Ovary (tissue), 10 donors: ENCODE measurements at regions of chr3 and their contacts with region 1.

Region 1: DNA sequence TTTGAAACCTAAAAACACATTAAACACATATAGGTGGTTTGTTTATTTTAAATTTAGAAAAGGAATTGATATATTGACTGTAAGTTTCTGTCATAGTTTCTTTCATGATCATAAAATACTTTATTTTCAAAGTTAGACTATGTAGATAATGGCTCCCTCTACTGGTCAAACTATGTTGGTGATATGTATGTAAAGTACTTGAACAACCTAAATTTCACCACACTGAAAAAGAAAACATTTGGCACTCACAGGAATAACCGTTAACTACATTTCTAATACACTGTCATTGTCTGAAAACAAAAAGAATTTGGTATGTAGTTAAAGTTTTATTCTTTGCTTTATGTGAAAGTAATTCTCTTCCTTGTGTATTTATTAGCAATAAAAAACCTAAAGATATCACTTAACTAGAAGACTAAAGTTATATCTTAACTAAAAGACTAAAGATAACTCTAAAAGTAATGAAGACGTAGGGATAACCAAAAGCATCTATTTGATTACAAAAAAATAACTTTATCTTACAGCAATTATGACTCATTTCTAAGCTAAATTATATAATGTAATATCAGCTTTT is 427.5 kb downstream of the VGLL3 start:
- DNase-seq: no peak
- H3K4me3 ChIP-seq: no peak overlapping the region
- H3K27ac ChIP-seq: no peak overlapping the region
- H3K4me1 ChIP-seq: no peaks in the 10 kb centered on the region
- H3K27me3 ChIP-seq: no peaks in the 10 kb centered on the region
- CTCF ChIP-seq: no peak
- EP300 ChIP-seq: no peak
- POLR2A ChIP-seq: no peak

Region 2: DNA sequence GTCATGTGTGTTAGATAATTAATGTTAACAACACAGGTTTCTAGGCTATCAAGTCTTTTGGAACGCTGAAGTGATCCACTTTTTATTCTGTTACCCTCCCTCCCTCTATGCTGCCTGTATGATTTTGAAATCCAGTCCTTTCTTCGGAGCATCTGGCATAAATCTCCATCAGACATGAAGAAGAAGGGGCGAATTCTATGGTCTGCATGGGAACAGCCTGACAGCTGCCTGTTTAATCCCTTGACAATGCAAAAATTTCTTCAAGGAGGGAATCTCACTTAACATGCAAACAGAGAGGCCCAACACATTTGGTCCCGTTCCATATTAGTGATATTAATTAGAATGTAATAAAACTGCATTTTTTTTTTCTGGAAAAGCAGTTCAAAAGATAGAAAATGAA is 282.2 kb after region 1 on chr3:
- intact Hi-C with region 1: no loop called
- DNase-seq: no peak
- H3K4me3 ChIP-seq: no peak overlapping the region
- H3K27ac ChIP-seq: no peak overlapping the region
- H3K4me1 ChIP-seq: no peaks in the 10 kb centered on the region
- H3K27me3 ChIP-seq: no peaks in the 10 kb centered on the region
- CTCF ChIP-seq: no peak
- EP300 ChIP-seq: no peak
- POLR2A ChIP-seq: no peak

Region 3: DNA sequence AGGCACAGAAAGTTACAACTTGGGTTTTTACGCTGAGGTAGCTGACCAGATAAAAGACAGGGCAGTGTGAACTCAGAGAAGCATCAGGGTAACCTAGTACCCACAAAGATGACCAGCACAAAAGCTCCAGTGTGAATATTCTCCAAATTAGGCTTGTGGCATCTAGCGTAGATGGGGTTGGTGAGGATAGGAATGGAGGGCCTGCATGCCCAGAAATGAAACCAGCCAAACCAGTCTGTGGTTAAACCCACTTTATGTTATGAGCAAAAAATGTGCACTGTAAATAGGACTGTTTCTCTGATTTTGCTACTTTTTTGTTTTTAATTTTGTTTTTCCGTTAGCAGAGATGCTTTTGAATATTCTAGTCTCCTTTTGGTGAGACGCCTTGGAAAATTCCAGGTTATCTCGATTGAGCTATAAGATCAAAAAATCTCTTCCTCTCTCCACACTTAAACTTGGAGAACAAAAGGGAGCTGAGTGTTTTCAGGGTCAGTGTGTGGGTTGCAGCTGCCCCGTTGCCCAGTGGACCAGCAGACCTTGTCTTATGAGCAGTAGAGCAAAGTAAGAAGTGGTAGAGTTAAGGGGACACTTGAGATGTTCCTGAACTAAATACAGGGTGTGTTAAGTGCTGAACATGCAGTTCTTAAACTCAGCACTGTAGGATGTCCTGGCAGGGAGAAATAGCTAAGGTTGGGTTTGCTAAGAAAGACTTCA is 1719.2 kb after region 1 on chr3:
- intact Hi-C with region 1: loop called in 1 of 4 experiments (anchors 10 kb)
- DNase-seq: no peak
- H3K4me3 ChIP-seq: no peak overlapping the region
- H3K27ac ChIP-seq: no peak overlapping the region
- H3K4me1 ChIP-seq: peaks cover 3% of the 10 kb centered on the region
- H3K27me3 ChIP-seq: no peaks in the 10 kb centered on the region
- CTCF ChIP-seq: no peak
- EP300 ChIP-seq: no peak
- POLR2A ChIP-seq: no peak